ENCODE measurements at regions of chr15 and their contacts with region 1.

Region 1: DNA sequence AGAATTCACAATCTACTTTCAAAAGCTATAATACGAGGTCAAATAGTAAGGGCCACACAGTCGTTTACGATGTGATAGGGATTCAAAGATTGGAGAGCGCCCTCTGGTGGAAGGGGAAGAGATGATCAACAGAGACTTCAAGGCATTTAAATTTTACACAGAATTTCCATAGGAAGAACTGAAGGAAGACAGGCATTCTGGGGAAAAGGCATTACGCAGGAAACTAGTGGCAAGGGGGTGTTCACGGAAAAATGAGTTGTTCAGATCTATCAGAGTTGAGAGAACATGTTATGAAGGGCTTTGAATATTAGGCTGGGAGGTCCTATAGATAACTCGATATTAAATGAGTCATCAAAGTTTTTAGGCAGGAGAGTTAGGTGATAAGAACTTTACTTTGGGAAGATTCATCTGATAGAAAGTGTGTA is 128.7 kb downstream of the FRMD5 start:
- DNase-seq: peak; percentile 25
- ATAC-seq: peak; percentile 87
- H3K4me3 ChIP-seq: no peak overlapping the region
- H3K27ac ChIP-seq: no peak overlapping the region
- H3K4me1 ChIP-seq: no peaks in the 10 kb centered on the region
- H3K27me3 ChIP-seq: no peaks in the 10 kb centered on the region
- CTCF ChIP-seq: peak; percentile 67 to 76 (median 71)
- EP300 ChIP-seq: no peak
- POLR2A ChIP-seq: no peak
- RAD21 ChIP-seq: peak; percentile 90

Region 2: DNA sequence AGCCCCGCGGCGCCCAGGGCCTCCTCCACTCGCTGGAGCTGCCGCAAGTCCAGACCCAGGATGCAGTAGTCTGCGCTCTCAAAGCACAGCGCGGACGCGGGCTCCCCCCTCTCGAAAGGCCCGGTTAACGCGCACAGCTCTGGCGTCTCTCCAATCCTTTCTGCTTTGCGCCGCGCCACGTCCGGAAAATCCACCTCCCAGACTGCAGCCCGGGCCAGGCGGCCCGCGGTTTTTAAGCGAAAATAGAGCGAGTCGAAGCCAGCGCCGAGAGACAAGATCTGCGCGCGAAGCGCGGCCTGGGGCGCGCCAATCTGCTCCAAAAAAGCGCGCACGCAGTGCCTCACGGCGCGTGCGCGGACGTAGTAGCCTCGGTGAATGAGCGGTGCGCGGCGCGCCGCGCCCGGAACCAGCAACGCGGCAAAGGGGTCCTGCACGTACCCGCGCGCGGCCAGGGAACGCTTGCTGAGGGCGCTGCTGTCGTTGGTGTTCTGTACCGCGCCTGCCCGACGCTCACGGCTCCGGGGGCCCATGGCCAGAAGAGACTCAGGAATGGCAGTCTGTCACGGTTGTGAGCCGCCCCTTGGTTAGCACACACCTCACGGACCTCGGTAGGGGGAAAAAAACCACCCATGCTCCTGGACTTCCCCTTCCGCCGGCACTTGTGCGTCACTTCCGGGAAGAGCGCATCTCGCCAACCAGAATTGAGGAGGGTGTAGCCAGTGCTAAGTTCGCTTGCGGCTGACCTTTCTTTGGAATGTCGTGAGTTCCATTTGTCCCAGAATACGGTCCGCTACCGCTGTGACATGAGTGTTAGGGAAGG is 736.2 kb before region 1 on chr15 and contains the start of gene LCMT2:
- CTCF ChIA-PET with region 1: no interaction called
- POLR2A ChIA-PET with region 1: no interaction called
- RAD21 ChIA-PET with region 1: no interaction called
- SMC1A ChIA-PET with region 1: no interaction called
- in situ Hi-C with region 1: no loop called
- intact Hi-C with region 1: no loop called
- DNase-seq: peak; percentile 81
- ATAC-seq: peak; percentile 91
- H3K4me3 ChIP-seq: peak within 1 kb of the TSS; percentile 87
- H3K27ac ChIP-seq: peak within 1 kb of the TSS; percentile 72
- H3K4me1 ChIP-seq: peaks cover 11% of the 10 kb centered on the region
- H3K27me3 ChIP-seq: no peaks in the 10 kb centered on the region
- CTCF ChIP-seq: no peak
- EP300 ChIP-seq: no peak; a peak in 1 of 4 replicates
- POLR2A ChIP-seq: peak; percentile 92
- RAD21 ChIP-seq: no peak
- polyA plus RNA-seq, gene LCMT2: 2.1 to 2.4 TPM

Region 3: GRCh38 chr15:43903864-43904290 is 162.5 kb before region 1 on chr15:
- CTCF ChIA-PET with region 1: interaction called, 115 read pairs
- POLR2A ChIA-PET with region 1: no interaction called
- RAD21 ChIA-PET with region 1: interaction called, 35 read pairs
- SMC1A ChIA-PET with region 1: interaction called, 63 read pairs
- in situ Hi-C with region 1: loop called (anchors 5 kb)
- intact Hi-C with region 1: loop called (anchors 1 kb)
- DNase-seq: peak; percentile 7
- ATAC-seq: peak; percentile 97
- H3K4me3 ChIP-seq: no peak overlapping the region
- H3K27ac ChIP-seq: no peak overlapping the region
- H3K4me1 ChIP-seq: no peaks in the 10 kb centered on the region
- H3K27me3 ChIP-seq: no peaks in the 10 kb centered on the region
- CTCF ChIP-seq: peak; percentile 75 to 89 (median 82)
- EP300 ChIP-seq: no peak
- POLR2A ChIP-seq: no peak
- RAD21 ChIP-seq: peak; percentile 99

Region 4: GRCh38 chr15:43939070-43939469 is 127.3 kb before region 1 on chr15:
- CTCF ChIA-PET with region 1: interaction called, 20 read pairs
- POLR2A ChIA-PET with region 1: no interaction called
- RAD21 ChIA-PET with region 1: no interaction called
- SMC1A ChIA-PET with region 1: interaction called, 7 read pairs
- in situ Hi-C with region 1: no loop called
- intact Hi-C with region 1: loop called (anchors 2 kb)
- DNase-seq: no peak
- ATAC-seq: 0 out of 3 replicates have a peak, but pooled peaks have one; percentile 31
- H3K4me3 ChIP-seq: no peak overlapping the region
- H3K27ac ChIP-seq: no peak overlapping the region
- H3K4me1 ChIP-seq: peaks cover 15% of the 10 kb centered on the region
- H3K27me3 ChIP-seq: no peaks in the 10 kb centered on the region
- CTCF ChIP-seq: peak; percentile 23 to 43 (median 30); a peak in 4 of 6 replicates
- EP300 ChIP-seq: no peak
- POLR2A ChIP-seq: no peak
- RAD21 ChIP-seq: peak; percentile 41; the same call in 1 of the 2 replicates

Region 5: GRCh38 chr15:43948691-43949325 is 117.5 kb before region 1 on chr15:
- CTCF ChIA-PET with region 1: interaction called, 11 read pairs
- POLR2A ChIA-PET with region 1: no interaction called
- RAD21 ChIA-PET with region 1: interaction called, 4 read pairs
- SMC1A ChIA-PET with region 1: interaction called, 8 read pairs
- in situ Hi-C with region 1: no loop called
- intact Hi-C with region 1: no loop called
- DNase-seq: peak; percentile 87
- ATAC-seq: peak; percentile 95
- H3K4me3 ChIP-seq: no peak overlapping the region
- H3K27ac ChIP-seq: peak overlapping the region; percentile 67
- H3K4me1 ChIP-seq: peaks cover 28% of the 10 kb centered on the region
- H3K27me3 ChIP-seq: no peaks in the 10 kb centered on the region
- CTCF ChIP-seq: no peak
- EP300 ChIP-seq: peak in 1 of 2 experiments; percentile 27; a peak in 1 of 4 replicates
- POLR2A ChIP-seq: no peak
- RAD21 ChIP-seq: no peak

Region 6: DNA sequence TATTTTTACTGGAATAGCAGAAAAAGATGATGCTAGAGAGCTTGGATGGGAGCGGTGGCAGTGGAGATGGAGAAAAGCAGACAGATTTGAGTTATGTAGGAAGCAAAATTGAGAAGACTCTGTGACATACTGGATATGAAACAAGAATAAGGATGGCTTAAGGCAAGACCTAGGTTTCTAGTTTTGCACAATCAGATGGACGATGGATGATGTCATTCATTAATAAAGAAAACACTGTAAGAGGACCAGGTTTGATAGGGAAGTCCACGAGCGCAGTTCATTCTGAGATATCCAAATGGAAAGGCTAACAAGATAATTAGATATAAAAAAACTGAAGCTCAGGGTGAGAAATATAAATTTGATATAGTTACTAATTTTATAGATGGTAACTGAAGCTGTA is 12.9 kb before region 1 on chr15:
- CTCF ChIA-PET with region 1: interaction called, 14 read pairs
- POLR2A ChIA-PET with region 1: no interaction called
- RAD21 ChIA-PET with region 1: interaction called, 3 read pairs
- SMC1A ChIA-PET with region 1: interaction called, 7 read pairs
- in situ Hi-C with region 1: no loop called
- intact Hi-C with region 1: no loop called
- DNase-seq: no peak
- ATAC-seq: no peak
- H3K4me3 ChIP-seq: no peak overlapping the region
- H3K27ac ChIP-seq: no peak overlapping the region
- H3K4me1 ChIP-seq: no peaks in the 10 kb centered on the region
- H3K27me3 ChIP-seq: 0 out of 4 replicates have a peak, but pooled peaks cover 0 to 2% of the 10 kb centered on the region in 2 experiments
- CTCF ChIP-seq: no peak
- EP300 ChIP-seq: no peak
- POLR2A ChIP-seq: no peak
- RAD21 ChIP-seq: no peak

Region 7: GRCh38 chr15:44137750-44138149 is 71.4 kb after region 1 on chr15:
- CTCF ChIA-PET with region 1: no interaction called
- POLR2A ChIA-PET with region 1: no interaction called
- RAD21 ChIA-PET with region 1: no interaction called
- SMC1A ChIA-PET with region 1: no interaction called
- in situ Hi-C with region 1: no loop called
- intact Hi-C with region 1: no loop called
- DNase-seq: no peak
- ATAC-seq: no peak
- H3K4me3 ChIP-seq: no peak overlapping the region
- H3K27ac ChIP-seq: no peak overlapping the region
- H3K4me1 ChIP-seq: no peaks in the 10 kb centered on the region
- H3K27me3 ChIP-seq: no peaks in the 10 kb centered on the region
- CTCF ChIP-seq: no peak
- EP300 ChIP-seq: no peak
- POLR2A ChIP-seq: no peak
- RAD21 ChIP-seq: no peak

Region 8: DNA sequence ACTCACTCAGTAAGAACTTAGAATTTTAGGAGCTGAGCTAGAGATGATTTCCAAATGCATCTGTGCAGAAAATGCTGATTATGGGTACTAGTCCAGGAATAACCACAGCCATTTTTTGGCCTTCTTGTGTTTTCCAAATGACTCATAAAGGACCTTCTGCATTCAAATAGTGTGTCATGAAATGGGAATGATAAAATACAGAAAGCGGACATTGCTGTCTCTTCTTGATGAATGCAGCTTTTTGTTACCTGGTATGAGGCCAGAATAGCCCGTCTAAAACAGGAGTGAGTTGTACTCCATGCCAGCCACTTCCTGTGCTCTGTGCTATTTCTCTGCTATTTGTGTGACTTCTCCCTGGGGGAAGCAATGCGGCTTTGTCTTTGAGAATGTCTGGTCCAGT is 149.3 kb after region 1 on chr15:
- CTCF ChIA-PET with region 1: interaction called, 5 read pairs
- POLR2A ChIA-PET with region 1: no interaction called
- RAD21 ChIA-PET with region 1: no interaction called
- SMC1A ChIA-PET with region 1: no interaction called
- in situ Hi-C with region 1: no loop called
- intact Hi-C with region 1: loop called (anchors 5 kb)
- DNase-seq: no peak
- ATAC-seq: no peak
- H3K4me3 ChIP-seq: no peak overlapping the region
- H3K27ac ChIP-seq: no peak overlapping the region
- H3K4me1 ChIP-seq: no peaks in the 10 kb centered on the region
- H3K27me3 ChIP-seq: no peaks in the 10 kb centered on the region
- CTCF ChIP-seq: no peak
- EP300 ChIP-seq: no peak
- POLR2A ChIP-seq: no peak
- RAD21 ChIP-seq: no peak

Measured in GM12878 (cell line).